ENCODE measurements at regions of chr4 and their contacts with region 1.

Region 1: DNA sequence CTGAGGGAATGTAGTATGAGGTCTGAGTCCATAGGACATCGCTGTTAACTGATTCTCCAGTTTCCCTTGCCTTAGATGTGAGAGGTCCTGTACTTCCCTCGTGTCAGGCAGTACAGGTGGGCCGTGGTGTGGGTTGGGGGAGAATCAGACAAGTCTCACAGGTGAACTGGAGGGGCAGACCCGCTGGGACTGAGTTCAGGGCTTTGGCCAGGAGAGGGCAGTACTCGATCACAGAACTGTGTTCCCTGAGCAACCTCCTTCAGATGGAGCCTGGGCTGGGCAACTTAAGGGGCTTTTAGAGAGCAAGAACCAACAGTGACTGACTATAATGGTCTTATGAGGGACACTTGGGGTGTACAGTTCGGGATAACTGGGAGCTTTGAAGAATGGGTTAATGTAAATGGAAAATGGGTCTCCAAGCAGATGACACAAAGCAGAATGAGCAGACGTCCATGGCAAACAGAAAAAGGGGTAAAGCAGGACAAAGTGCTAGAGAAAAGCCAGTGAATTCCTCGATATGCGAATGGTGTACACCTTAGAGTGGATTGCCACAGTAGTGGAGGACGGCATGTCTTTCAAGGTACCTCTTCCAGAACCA is 83.6 kb downstream of the CCNG2 start:
- DNase-seq: peak; percentile 25
- H3K4me3 ChIP-seq: no peak overlapping the region
- H3K27ac ChIP-seq: no peak overlapping the region
- H3K4me1 ChIP-seq: no peaks in the 10 kb centered on the region
- H3K27me3 ChIP-seq: peaks cover 51% of the 10 kb centered on the region
- CTCF ChIP-seq: peak; percentile 80

Region 2: GRCh38 chr4:77203380-77204197 is 37.0 kb before region 1 on chr4:
- intact Hi-C with region 1: no loop called
- DNase-seq: peak; percentile 23
- H3K4me3 ChIP-seq: no peak overlapping the region
- H3K27ac ChIP-seq: no peak overlapping the region
- H3K4me1 ChIP-seq: no peaks in the 10 kb centered on the region
- H3K27me3 ChIP-seq: peaks cover 16% of the 10 kb centered on the region
- CTCF ChIP-seq: peak; percentile 82

Region 3: GRCh38 chr4:77358315-77358928 is 117.9 kb after region 1 on chr4:
- intact Hi-C with region 1: loop called (anchors 5 kb)
- DNase-seq: no peak
- H3K4me3 ChIP-seq: no peak overlapping the region
- H3K27ac ChIP-seq: no peak overlapping the region
- H3K4me1 ChIP-seq: no peaks in the 10 kb centered on the region
- H3K27me3 ChIP-seq: peaks cover 35% of the 10 kb centered on the region
- CTCF ChIP-seq: peak; percentile 70

Measured in left ventricle myocardium inferior (tissue), 1 donor.